ENCODE measurements at regions of chr11 and their contacts with region 1.

Region 1: DNA sequence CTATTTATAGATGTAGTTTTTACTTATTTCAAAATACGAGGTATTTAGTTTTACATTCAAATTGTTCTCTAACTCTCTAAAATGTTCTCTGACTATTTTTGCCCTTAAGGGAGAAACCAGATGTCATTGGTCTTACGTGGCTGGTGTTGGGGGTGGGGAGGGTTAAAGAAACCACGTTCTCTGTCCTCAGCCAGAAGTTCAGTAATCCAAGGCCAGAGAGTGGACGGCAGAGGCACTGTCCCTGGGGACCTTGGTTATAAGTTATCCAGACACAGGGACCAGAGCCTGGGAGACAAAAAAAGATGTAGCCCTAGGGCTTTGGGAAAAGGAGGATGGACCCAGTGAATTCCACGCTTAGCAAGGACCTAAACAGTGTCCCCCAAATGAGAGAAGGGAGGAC is 706 bp upstream of the OR51E1 start:
- DNase-seq: no peak
- H3K4me3 ChIP-seq: no peak overlapping the region
- H3K27ac ChIP-seq: no peak overlapping the region
- H3K4me1 ChIP-seq: no peaks in the 10 kb centered on the region
- H3K27me3 ChIP-seq: no peaks in the 10 kb centered on the region
- CTCF ChIP-seq: no peak
- POLR2A ChIP-seq: no peak

Region 2: GRCh38 chr11:4626207-4627099 is 16.6 kb before region 1 on chr11:
- intact Hi-C with region 1: no loop called
- DNase-seq: no peak
- H3K4me3 ChIP-seq: no peak overlapping the region
- H3K27ac ChIP-seq: no peak overlapping the region
- H3K4me1 ChIP-seq: no peaks in the 10 kb centered on the region
- H3K27me3 ChIP-seq: peaks cover 0 to 5% of the 10 kb centered on the region in 2 donors
- CTCF ChIP-seq: peak; percentile 17 to 43 (median 28)
- POLR2A ChIP-seq: no peak

Region 3: DNA sequence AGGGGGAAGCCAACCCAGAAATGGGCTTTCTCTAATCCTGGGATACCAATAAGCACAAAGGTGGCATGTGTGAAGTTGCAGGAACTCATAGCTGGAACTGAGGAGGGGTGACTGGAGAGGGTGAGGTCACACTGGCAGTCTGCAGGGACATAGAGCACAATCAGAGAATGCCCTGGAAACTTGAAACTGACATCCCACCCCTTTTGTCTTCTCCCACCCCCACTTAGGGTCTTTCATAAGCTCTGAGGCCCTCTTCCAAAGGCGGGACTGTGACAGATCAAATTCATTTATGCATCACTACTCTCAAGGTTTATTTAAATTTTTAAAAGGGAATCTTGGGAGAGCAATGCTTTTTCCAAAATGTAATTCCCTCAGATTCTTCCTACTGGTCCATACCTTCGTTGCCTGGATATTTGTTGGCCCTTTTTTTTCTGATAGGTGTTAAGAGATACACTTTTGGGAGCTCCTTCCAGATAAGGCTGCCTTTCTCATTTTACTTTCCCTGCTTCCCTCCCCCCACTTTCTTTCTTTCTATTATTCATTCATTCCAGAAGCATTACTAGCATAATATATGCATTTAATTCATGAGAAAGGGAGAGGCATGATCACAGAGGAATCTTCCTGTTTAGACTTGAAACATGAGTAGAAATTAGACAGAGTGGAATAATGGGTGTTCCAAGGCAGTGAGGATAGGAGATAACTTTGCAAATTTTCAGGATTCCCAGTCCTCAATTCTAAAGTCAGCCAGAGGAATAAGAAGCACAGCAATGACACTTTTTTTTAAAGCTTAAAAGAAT is 39.7 kb after region 1 on chr11:
- intact Hi-C with region 1: loop called (anchors 1 kb)
- DNase-seq: no peak
- H3K4me3 ChIP-seq: no peak overlapping the region
- H3K27ac ChIP-seq: no peak overlapping the region
- H3K4me1 ChIP-seq: no peaks in the 10 kb centered on the region
- H3K27me3 ChIP-seq: no peaks in the 10 kb centered on the region
- CTCF ChIP-seq: no peak
- POLR2A ChIP-seq: no peak

Measured in breast epithelium (tissue), 4 donors.